Activated CD8-positive, alpha-beta memory T cell treated with anti-CD3 and anti-CD28 coated beads, Interleukin-2, amount 10 ng/mL, durations not matched to agents 7 days and 5 days (primary cell): ENCODE measurements at regions of chr11 and their contacts with region 1.

Region 1: DNA sequence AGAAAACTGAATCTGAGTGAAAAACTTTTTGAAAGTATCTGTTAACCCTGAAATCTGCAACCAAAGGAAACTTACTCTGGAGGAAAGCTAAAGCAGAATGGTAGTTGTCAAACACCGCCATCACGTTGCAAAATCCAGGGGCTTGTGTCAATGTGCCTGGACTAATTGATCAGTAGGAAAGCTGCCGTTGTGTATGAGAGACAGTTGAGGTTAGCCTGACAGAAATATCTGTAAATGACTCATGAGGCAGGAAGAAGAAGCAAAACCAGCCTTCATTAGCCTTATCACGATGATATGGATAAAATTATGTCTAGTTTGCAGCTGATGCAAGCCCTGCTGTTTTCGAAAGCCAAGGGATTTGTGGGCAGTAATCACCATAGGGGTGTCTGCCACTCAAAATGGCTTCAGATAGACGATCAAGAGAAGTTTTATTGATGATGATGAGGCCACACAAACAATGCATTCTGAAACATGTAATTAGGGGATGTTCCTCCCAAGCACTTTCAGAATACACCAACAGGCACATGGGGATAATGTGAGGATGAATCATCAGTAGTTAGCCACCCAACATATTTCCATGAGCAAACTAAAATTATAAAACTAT is 8.9 kb downstream of the SCGB1A1 start:
- DNase-seq: peak; percentile 62
- ATAC-seq: peak; percentile 64
- H3K4me3 Mint-ChIP-seq: peak overlapping the region; percentile 57
- H3K27ac Mint-ChIP-seq: peak overlapping the region; percentile 94
- H3K4me1 Mint-ChIP-seq: peaks cover 72% of the 10 kb centered on the region
- H3K27me3 Mint-ChIP-seq: peaks cover 9% of the 10 kb centered on the region

Region 2: GRCh38 chr11:62242021-62242420 is 185.7 kb before region 1 on chr11 and contains the start of gene SCGB1D2:
- CTCF ChIA-PET with region 1: no interaction called
- DNase-seq: no peak
- ATAC-seq: no peak
- H3K4me3 Mint-ChIP-seq: no peak within 1 kb of the TSS
- H3K27ac Mint-ChIP-seq: no peak within 1 kb of the TSS
- H3K4me1 Mint-ChIP-seq: no peaks in the 10 kb centered on the region
- H3K27me3 Mint-ChIP-seq: peaks cover 31% of the 10 kb centered on the region
- total RNA-seq, gene SCGB1D2: not detected

Region 3: DNA sequence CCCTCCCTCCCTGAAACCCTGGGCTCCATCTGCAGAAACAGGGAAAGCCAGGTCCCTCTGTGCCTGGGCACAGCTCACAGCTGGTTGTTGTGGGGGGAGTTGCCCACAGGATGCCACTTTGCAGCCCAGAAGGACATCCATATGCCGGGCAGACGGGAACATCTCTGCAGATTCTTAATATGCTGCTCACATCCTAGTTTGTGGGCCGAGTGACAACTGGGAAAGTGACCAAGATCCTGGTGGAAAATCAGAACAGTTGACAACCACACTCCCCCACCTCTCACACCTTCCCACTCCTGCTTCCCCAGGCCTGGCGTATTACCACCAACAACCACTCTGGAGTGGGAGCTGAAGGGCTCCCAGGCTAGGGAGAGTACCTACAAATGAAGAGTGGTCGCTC is 16.2 kb before region 1 on chr11:
- CTCF ChIA-PET with region 1: interaction called, 25 read pairs
- DNase-seq: no peak
- ATAC-seq: no peak
- H3K4me3 Mint-ChIP-seq: no peak overlapping the region
- H3K27ac Mint-ChIP-seq: no peak overlapping the region
- H3K4me1 Mint-ChIP-seq: no peaks in the 10 kb centered on the region
- H3K27me3 Mint-ChIP-seq: no peaks in the 10 kb centered on the region

Region 4: DNA sequence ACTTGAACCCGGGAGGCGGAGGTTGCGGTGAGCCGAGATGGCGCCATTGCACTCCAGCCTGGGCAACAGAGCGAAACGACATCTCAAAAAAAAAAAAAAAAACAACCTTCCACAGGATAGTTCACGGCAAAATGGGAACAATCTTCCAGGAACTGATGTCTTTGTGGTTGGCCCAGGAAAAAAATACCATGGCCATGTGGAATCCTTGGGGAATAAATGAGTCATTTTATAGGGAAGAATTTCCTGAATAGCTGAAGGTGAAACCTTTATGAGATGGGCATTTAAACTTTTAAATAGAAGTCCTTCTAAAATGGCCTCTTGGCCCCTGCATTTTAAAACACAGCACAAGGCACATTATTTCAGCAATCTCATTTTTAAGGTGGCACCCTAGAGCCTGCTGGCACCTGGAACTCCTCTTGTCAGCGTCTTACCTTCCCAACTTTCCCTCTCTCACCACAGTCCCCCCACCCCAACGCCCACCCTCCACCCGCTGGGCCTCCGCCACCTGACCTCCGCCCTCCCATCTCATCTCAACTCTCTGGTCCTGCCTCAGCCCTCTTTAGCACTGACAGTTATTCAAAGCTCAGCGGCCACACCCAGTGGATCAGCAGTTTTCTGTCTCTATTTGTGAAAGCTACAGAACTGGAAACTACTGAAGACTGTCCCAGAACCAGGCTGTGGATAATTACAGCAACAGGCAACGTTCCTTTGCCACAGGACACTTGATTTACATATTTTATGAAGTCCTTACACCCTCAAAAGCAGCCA is 34.2 kb after region 1 on chr11:
- CTCF ChIA-PET with region 1: interaction called, 10 read pairs
- DNase-seq: no peak
- ATAC-seq: no peak
- H3K4me3 Mint-ChIP-seq: no peak overlapping the region
- H3K27ac Mint-ChIP-seq: no peak overlapping the region
- H3K4me1 Mint-ChIP-seq: peaks cover 12% of the 10 kb centered on the region
- H3K27me3 Mint-ChIP-seq: no peaks in the 10 kb centered on the region

Region 5: GRCh38 chr11:62542750-62543567 is 115.2 kb after region 1 on chr11:
- CTCF ChIA-PET with region 1: interaction called, 252 read pairs
- DNase-seq: peak; percentile 89
- ATAC-seq: peak; percentile 37
- H3K4me3 Mint-ChIP-seq: peak overlapping the region; percentile 98
- H3K27ac Mint-ChIP-seq: peak overlapping the region; percentile 89
- H3K4me1 Mint-ChIP-seq: peaks cover 70% of the 10 kb centered on the region
- H3K27me3 Mint-ChIP-seq: peaks cover 6% of the 10 kb centered on the region

Region 6: GRCh38 chr11:62573592-62574362 is 146.0 kb after region 1 on chr11 and contains the start of gene EEF1G:
- CTCF ChIA-PET with region 1: interaction called, 47 read pairs
- DNase-seq: peak; percentile 100
- ATAC-seq: peak; percentile 94
- H3K4me3 Mint-ChIP-seq: peak within 1 kb of the TSS; percentile 94
- H3K27ac Mint-ChIP-seq: peak within 1 kb of the TSS; percentile 89
- H3K4me1 Mint-ChIP-seq: peaks cover 51% of the 10 kb centered on the region
- H3K27me3 Mint-ChIP-seq: no peaks in the 10 kb centered on the region
- total RNA-seq, gene EEF1G: 878 to 1,201 TPM

Region 7: DNA sequence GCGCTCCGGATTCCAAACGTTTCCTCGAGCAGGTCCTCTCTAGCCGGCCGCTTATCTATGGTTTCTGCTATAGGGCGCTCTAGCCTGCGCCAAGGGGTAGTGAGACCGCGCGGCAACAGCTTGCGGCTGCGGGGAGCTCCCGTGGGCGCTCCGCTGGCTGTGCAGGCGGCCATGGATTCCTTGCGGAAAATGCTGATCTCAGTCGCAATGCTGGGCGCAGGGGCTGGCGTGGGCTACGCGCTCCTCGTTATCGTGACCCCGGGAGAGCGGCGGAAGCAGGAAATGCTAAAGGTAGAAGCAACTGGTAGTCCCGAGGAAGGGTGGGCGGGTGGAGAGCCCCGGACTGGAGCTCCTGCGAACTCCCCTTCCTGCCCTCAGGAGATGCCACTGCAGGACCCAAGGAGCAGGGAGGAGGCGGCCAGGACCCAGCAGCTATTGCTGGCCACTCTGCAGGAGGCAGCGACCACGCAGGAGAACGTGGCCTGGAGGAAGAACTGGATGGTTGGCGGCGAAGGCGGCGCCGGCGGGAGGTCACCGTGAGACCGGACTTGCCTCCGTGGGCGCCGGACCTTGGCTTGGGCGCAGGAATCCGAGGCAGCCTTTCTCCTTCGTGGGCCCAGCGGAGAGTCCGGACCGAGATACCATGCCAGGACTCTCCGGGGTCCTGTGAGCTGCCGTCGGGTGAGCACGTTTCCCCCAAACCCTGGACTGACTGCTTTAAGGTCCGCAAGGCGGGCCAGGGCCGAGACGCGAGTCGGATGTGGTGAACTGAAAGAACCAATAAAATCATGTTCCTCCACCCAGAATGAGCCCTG is 244.1 kb after region 1 on chr11 and contains the starts of genes LBHD1 and UQCC3:
- CTCF ChIA-PET with region 1: interaction called, 11 read pairs
- DNase-seq: peak; percentile 96
- ATAC-seq: peak; percentile 83
- H3K4me3 Mint-ChIP-seq: peak within 1 kb of the TSS; percentile 95
- H3K27ac Mint-ChIP-seq: peak within 1 kb of the TSS; percentile 96
- H3K4me1 Mint-ChIP-seq: peaks cover 54% of the 10 kb centered on the region
- H3K27me3 Mint-ChIP-seq: no peaks in the 10 kb centered on the region
- total RNA-seq, gene LBHD1: 17.7 to 27.5 TPM
- total RNA-seq, gene UQCC3: 7.2 to 9.0 TPM